Caco-2 (cell line): ENCODE measurements at regions of chr4 and their contacts with region 1.

Region 1: GRCh38 chr4:81471588-81472288 is at the start of gene RASGEF1B:
- DNase-seq: peak; percentile 88 to 94
- H3K4me3 ChIP-seq: peak within 1 kb of the TSS; percentile 92
- H3K4me3 Mint-ChIP-seq: peak within 1 kb of the TSS; percentile 95
- H3K27ac Mint-ChIP-seq: peak within 1 kb of the TSS; percentile 94
- H3K4me1 ChIP-seq: peaks cover 38% of the 10 kb centered on the region
- H3K4me1 Mint-ChIP-seq: peaks cover 31% of the 10 kb centered on the region
- H3K27me3 ChIP-seq: no peaks in the 10 kb centered on the region
- H3K27me3 Mint-ChIP-seq: no peaks in the 10 kb centered on the region
- CTCF ChIP-seq: no peak
- total RNA-seq, gene RASGEF1B: 24.8 and 32.3 TPM in 2 replicates

Region 2: GRCh38 chr4:81531428-81531827 is 59.7 kb after region 1 on chr4:
- CTCF ChIA-PET with region 1: interaction called, 4 read pairs
- POLR2A ChIA-PET with region 1: interaction called, 3 read pairs
- intact Hi-C with region 1: loop called (anchors 1 kb)
- DNase-seq: peak in 1 of 2 experiments; percentile 47
- H3K4me3 ChIP-seq: no peak overlapping the region
- H3K4me3 Mint-ChIP-seq: peak overlapping the region; percentile 33
- H3K27ac Mint-ChIP-seq: no peak overlapping the region
- H3K4me1 ChIP-seq: peaks cover 17% of the 10 kb centered on the region; the same call in 1 of the 2 replicates
- H3K4me1 Mint-ChIP-seq: peaks cover 6% of the 10 kb centered on the region
- H3K27me3 ChIP-seq: no peaks in the 10 kb centered on the region
- H3K27me3 Mint-ChIP-seq: no peaks in the 10 kb centered on the region
- CTCF ChIP-seq: no peak

Region 3: GRCh38 chr4:81688085-81688484 is 216.3 kb after region 1 on chr4:
- CTCF ChIA-PET with region 1: interaction called, 21 read pairs
- POLR2A ChIA-PET with region 1: no interaction called
- intact Hi-C with region 1: loop called (anchors 1 kb)
- DNase-seq: peak in 1 of 2 experiments; percentile 5
- H3K4me3 ChIP-seq: no peak overlapping the region
- H3K4me3 Mint-ChIP-seq: no peak overlapping the region
- H3K27ac Mint-ChIP-seq: no peak overlapping the region
- H3K4me1 ChIP-seq: no peaks in the 10 kb centered on the region
- H3K4me1 Mint-ChIP-seq: peaks cover 4% of the 10 kb centered on the region
- H3K27me3 ChIP-seq: no peaks in the 10 kb centered on the region
- H3K27me3 Mint-ChIP-seq: no peaks in the 10 kb centered on the region
- CTCF ChIP-seq: peak; percentile 10 to 27

Region 4: GRCh38 chr4:81818385-81818920 is 346.7 kb after region 1 on chr4:
- CTCF ChIA-PET with region 1: no interaction called
- POLR2A ChIA-PET with region 1: interaction called, 4 read pairs
- intact Hi-C with region 1: loop called (anchors 1 kb)
- DNase-seq: peak; percentile 78 to 82
- H3K4me3 ChIP-seq: no peak overlapping the region
- H3K4me3 Mint-ChIP-seq: peak overlapping the region; percentile 49
- H3K27ac Mint-ChIP-seq: peak overlapping the region; percentile 66
- H3K4me1 ChIP-seq: peaks cover 29% of the 10 kb centered on the region
- H3K4me1 Mint-ChIP-seq: peaks cover 22% of the 10 kb centered on the region
- H3K27me3 ChIP-seq: no peaks in the 10 kb centered on the region
- H3K27me3 Mint-ChIP-seq: no peaks in the 10 kb centered on the region
- CTCF ChIP-seq: no peak

Region 5: DNA sequence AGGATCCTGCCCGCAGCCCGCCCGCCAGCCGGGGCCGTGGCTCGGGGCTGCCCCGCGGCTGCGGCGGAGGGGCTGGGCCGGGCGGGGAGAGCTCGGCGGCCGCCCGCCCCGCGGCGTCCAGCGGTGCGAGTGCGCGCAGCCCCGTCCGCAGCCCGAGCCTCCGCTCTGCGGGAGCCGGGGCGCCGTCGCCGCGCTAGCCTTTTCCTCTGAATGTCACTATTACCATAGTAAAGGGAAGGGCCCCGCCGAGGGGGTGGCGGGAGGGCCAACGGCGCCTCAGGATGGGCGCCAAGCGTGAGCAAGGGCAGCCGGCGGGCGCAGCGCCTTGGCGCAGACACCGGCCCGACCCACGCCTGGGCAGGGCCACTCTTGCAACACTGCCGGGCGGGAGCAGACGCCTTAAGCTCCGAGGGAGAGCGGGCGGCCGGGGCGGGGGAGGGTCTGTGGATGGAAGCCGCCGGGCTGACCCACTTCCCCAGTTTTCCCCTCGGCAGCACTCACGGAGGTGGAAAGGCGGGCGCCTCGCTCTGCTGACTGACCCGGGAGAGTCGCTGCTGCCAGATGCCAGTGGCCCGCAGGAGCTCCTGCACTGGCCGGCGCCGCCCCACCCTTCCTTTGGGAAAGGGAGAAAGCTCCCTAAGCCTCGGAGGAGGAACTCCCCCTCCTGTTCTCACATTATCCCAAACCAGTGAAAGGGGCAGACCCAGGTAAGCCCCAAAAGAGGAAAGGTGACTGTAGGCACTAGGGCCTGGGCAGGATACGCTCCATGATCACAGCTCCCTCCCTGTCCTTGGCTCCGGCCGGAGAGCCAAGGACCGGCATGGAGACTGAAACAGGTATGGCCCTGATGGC is 572.6 kb after region 1 on chr4:
- CTCF ChIA-PET with region 1: interaction called, 8 read pairs
- POLR2A ChIA-PET with region 1: interaction called, 3 read pairs
- intact Hi-C with region 1: loop called (anchors 1 kb)
- DNase-seq: peak; percentile 79 to 80
- H3K4me3 ChIP-seq: peak overlapping the region; percentile 63
- H3K4me3 Mint-ChIP-seq: peak overlapping the region; percentile 93
- H3K27ac Mint-ChIP-seq: no peak overlapping the region
- H3K4me1 ChIP-seq: peaks cover 19% of the 10 kb centered on the region
- H3K4me1 Mint-ChIP-seq: peaks cover 7% of the 10 kb centered on the region
- H3K27me3 ChIP-seq: no peaks in the 10 kb centered on the region
- H3K27me3 Mint-ChIP-seq: no peaks in the 10 kb centered on the region
- CTCF ChIP-seq: no peak